ENCODE measurements at regions of chr7 and their contacts with region 1.

Region 1: DNA sequence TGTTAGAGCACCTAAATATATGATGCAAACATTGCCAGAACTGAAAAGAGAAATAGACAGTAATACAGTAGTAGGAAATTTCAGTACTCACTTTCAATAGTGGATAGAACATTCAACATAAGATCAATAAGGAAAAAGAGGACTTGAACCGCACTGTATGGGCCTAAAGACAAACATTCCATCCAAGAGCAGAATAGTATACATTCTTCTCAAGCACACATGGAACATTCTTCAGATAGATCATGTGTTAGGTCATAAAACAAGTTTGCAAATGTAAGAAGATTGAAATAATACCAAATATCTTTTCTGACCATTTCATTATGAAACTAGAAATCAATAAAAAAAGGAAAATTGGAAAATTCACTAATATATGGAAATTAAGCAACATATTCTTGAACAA is 185.4 kb upstream of the FOXP2 start:
- DNase-seq: no peak
- H3K4me3 ChIP-seq: no peak overlapping the region
- H3K27ac ChIP-seq: no peak overlapping the region
- H3K4me1 ChIP-seq: no peaks in the 10 kb centered on the region
- H3K27me3 ChIP-seq: no peaks in the 10 kb centered on the region
- CTCF ChIP-seq: no peak

Region 2: GRCh38 chr7:113582471-113582870 is 646.8 kb before region 1 on chr7:
- CTCF ChIA-PET with region 1: no interaction called
- POLR2A ChIA-PET with region 1: no interaction called
- intact Hi-C with region 1: loop called (anchors 10 kb)
- DNase-seq: no peak
- H3K4me3 ChIP-seq: no peak overlapping the region
- H3K27ac ChIP-seq: no peak overlapping the region
- H3K4me1 ChIP-seq: no peaks in the 10 kb centered on the region
- H3K27me3 ChIP-seq: no peaks in the 10 kb centered on the region
- CTCF ChIP-seq: no peak

Region 3: DNA sequence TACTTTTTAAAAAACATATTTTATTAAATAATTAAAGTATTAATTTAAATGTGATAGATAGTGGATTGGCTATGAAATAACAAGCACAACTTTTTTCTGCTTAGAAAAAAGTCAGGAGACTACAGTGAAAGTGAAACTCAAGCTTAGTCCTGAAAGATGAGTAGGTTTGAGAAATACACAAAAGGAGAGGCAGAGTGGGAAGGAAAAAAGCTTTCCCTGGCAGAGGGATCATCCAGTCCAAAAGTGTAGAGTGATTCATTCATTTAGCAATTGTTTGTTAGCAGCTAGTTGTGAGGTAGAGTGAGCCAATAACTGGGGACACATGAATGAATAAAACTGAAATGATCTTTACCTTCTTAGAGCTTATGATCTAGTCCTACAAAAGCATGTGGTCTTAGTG is 278.8 kb after region 1 on chr7:
- CTCF ChIA-PET with region 1: no interaction called
- POLR2A ChIA-PET with region 1: no interaction called
- intact Hi-C with region 1: no loop called
- DNase-seq: no peak
- H3K4me3 ChIP-seq: no peak overlapping the region
- H3K27ac ChIP-seq: no peak overlapping the region
- H3K4me1 ChIP-seq: no peaks in the 10 kb centered on the region
- H3K27me3 ChIP-seq: no peaks in the 10 kb centered on the region
- CTCF ChIP-seq: no peak

Measured in PC-9 (cell line).